ENCODE measurements at regions of chr17 and their contacts with region 1.

Region 1: DNA sequence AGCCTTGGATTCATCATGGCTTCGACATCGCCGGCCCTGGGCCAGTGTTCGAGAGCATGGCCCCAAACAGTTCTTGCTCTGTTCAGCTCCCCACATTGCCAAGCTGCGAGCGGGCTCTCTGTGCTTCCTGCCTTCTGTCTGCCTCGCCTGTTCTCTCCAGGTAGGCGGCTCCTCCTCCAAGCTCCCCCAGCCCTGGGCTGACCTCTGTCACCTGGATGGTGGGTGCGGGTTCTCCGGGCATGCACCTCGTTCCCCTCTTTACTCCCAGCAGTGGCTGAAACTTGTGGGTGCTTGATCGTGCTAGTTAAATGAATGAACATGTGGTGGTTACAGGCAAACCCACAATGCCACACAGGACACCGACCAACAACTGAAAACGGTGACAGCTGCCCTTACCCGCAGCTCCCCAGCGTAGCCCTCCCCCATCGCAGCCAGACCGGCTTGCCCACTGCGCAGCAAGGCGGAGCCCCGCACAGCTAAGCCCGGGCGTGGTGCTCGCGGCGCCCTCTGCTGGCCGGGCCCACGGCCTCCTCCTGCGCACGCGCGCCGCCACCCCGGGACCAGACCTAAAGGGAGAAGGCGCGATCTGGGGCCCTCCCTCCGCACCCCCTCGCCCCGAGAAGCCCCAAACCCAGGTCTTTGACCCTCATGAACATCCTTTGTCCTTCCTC is 23.0 kb upstream of the EIF1 start:
- DNase-seq: peak; percentile 79 to 95 (median 90)
- ATAC-seq: peak; percentile 82 to 87
- H3K4me3 Mint-ChIP-seq: peak overlapping the region; percentile 87 to 98 (median 93)
- H3K27ac Mint-ChIP-seq: peak overlapping the region; percentile 89 to 100 (median 96)
- H3K4me1 Mint-ChIP-seq: peaks cover 11 to 30% (median 22%) of the 10 kb centered on the region in 4 donors
- H3K27me3 Mint-ChIP-seq: no peaks in the 10 kb centered on the region

Region 2: GRCh38 chr17:41548844-41549595 is 116.7 kb before region 1 on chr17:
- POLR2A ChIA-PET with region 1: interaction called, 11 read pairs
- DNase-seq: peak; percentile 70 to 89 (median 79)
- ATAC-seq: peak; percentile 89 to 91
- H3K4me3 Mint-ChIP-seq: peak overlapping the region; percentile 52 to 80 (median 66)
- H3K27ac Mint-ChIP-seq: peak overlapping the region in 7 of 10 donors; percentile 24 to 71 (median 63)
- H3K4me1 Mint-ChIP-seq: peaks cover 7 to 19% (median 17%) of the 10 kb centered on the region in 4 donors
- H3K27me3 Mint-ChIP-seq: peaks cover 2 to 26% (median 7%) of the 10 kb centered on the region in 5 donors

Region 3: DNA sequence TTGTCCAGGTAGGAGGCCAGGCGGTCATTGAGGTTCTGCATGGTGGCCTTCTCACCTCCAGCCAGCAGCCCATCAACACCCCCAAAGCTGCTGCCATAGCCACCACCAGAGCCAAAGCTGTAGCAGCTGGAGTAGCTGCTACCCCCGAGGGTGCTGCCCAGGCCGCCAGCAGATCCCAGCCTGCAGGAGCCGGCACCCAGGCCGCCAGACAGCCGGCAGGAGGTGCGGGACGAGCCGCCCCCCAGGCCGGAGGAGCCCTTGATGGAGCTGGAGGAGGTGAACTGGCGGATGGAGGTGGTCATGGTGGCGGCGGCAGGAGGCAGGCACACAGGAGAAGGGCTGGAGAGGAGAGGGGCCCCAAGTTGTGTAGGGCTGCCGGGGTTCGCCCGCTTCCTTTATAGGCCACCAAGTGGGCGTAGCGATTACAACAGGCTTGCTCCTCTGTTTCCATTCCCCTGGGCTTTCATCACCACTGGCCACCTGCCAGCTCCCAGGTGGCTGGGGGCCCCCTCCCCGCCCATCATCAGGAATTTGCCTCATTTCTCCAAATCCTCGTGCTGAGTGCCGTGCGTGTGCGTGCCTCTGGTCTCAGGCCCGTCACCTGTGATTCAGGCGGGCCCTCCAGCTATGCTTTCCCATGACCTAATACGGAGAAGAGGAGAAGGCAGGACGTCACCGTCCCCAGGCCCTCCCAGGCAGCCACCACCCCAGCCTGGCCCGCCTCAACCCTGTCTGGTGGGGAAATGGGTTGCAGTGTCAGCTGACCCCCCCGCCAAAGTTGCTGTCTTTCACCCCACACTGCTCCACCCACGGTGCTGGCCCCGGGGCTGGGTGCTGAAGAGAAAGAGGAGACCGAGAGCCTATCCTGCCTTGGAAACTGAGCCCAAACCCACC is 41.2 kb before region 1 on chr17 and contains the start of gene KRT17:
- POLR2A ChIA-PET with region 1: no interaction called
- DNase-seq: peak in 1 of 10 donors; percentile 31
- ATAC-seq: no peak
- H3K4me3 Mint-ChIP-seq: no peak within 1 kb of the TSS
- H3K27ac Mint-ChIP-seq: no peak within 1 kb of the TSS
- H3K4me1 Mint-ChIP-seq: peaks cover 0 to 1% (median 0%) of the 10 kb centered on the region in 4 donors
- H3K27me3 Mint-ChIP-seq: peaks cover 0 to 19% (median 3%) of the 10 kb centered on the region in 5 donors
- polyA plus RNA-seq, gene KRT17: not detected

Region 4: GRCh38 chr17:41648411-41649195 is 17.1 kb before region 1 on chr17:
- POLR2A ChIA-PET with region 1: interaction called, 45 read pairs
- DNase-seq: peak; percentile 67 to 91 (median 83)
- ATAC-seq: peak; percentile 90 to 93
- H3K4me3 Mint-ChIP-seq: peak overlapping the region; percentile 63 to 92 (median 82)
- H3K27ac Mint-ChIP-seq: peak overlapping the region in 7 of 10 donors; percentile 41 to 93 (median 88)
- H3K4me1 Mint-ChIP-seq: peaks cover 9 to 10% (median 10%) of the 10 kb centered on the region in 4 donors
- H3K27me3 Mint-ChIP-seq: peaks cover 0 to 3% (median 0%) of the 10 kb centered on the region in 5 donors

Region 5: DNA sequence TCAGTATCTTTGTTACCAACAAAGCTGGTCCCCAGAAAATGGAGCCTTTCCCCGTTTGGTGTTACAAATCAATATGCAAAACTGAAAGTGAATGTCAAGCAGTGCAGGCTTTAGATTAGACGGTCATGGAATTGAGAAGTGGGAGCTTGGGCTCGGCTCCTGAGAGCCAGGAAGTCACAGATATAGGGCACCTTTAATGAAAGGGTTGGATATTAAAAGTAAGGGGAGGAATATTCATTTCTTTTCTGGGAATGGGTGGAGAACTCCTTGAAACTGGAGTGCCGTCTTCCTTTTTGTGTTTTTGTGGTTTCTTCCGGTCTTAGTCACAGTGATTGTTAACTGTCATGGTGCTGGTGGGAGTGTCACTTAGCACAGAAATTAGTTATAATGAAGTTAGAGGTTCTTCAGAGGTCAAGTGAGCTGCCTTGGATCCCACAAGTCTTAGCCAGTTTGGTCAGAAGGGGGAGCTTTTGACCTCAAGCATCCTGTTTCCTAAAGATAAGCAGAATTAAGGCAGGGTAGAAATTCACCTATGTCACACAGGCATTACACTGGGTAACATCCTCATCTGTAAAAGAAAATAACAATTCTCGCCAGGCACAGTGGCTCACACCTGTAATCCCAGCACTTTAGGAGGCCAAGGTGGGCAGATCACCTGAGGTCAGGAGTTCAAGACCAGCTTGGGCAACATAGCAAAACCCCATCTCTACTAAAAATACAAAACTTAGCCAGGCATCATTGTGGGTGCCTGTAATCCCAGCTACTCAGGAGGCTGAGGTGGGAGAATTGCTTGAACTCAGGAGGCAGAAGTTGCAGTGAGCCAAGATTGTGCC is 13.4 kb after region 1 on chr17:
- POLR2A ChIA-PET with region 1: interaction called, 64 read pairs
- DNase-seq: peak in 8 of 10 donors; percentile 29 to 72 (median 58)
- ATAC-seq: peak; percentile 86 to 89
- H3K4me3 Mint-ChIP-seq: peak overlapping the region; percentile 81 to 95 (median 86)
- H3K27ac Mint-ChIP-seq: peak overlapping the region; percentile 94 to 99 (median 95)
- H3K4me1 Mint-ChIP-seq: peaks cover 17 to 40% (median 25%) of the 10 kb centered on the region in 4 donors
- H3K27me3 Mint-ChIP-seq: no peaks in the 10 kb centered on the region